Mammary epithelial cell (primary cell): ENCODE measurements at regions of chr4 and their contacts with region 1.

Region 1: GRCh38 chr4:152850377-152850776 is 70.6 kb downstream of the ARFIP1 start:
- DNase-seq: peak; percentile 83
- H3K4me3 ChIP-seq: peak overlapping the region in 1 of 3 experiments; percentile 5
- H3K27ac ChIP-seq: peak overlapping the region; percentile 78
- H3K4me1 ChIP-seq: peaks cover 26% of the 10 kb centered on the region
- H3K27me3 ChIP-seq: no peaks in the 10 kb centered on the region
- CTCF ChIP-seq: no peak

Region 2: DNA sequence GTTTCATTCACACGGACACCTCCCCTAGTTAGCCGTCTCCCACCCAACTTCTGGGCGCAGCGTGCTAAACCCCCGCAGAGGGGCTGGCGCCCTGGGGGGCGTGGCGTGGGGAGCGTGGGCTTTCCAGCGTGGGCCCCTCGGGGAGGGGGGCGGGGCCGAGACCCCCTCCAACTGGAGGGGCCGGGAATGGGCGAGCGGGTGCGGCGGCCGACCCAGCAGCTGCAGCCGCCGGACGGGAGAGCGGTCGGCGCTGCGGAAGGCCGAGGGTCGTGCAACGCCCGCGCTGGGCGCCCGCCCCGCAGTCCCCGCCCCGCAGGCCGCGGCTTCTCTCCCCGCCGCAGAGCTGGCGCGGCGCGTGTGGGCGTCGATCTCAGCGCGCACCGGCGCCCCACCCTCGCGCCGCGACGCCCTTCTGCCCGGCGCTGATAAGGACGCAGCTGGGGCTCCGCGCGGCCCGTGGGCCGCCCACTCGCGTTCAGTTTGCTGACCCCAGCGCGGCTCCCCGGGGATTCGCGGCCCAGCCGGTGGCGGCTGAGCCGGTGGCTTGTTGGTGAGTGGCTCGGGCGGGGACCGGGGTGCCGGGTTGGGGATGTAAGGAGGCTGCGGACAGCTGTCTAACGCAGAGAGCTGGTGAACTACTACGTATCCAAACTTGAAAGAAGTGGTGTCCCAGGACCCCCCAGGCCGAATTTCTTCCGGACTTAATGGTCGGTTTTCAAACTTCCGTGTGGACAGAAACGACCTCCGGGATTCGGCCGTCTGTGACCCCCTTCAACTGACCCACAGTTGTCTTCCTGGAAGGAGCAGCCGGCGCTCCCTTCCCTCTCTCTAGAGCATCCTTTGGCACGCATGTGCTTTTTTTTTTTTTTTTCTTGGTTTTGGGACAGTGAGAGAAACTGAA is 87.2 kb after region 1 on chr4:
- CTCF ChIA-PET with region 1: no interaction called
- dilution Hi-C with region 1: no loop called
- in situ Hi-C with region 1: no loop called
- intact Hi-C with region 1: loop called (anchors 1 kb)
- DNase-seq: peak; percentile 58
- H3K4me3 ChIP-seq: peak overlapping the region; percentile 88 to 91 (median 90)
- H3K27ac ChIP-seq: peak overlapping the region; percentile 52
- H3K4me1 ChIP-seq: peaks cover 16% of the 10 kb centered on the region
- H3K27me3 ChIP-seq: no peaks in the 10 kb centered on the region
- CTCF ChIP-seq: no peak

Region 3: DNA sequence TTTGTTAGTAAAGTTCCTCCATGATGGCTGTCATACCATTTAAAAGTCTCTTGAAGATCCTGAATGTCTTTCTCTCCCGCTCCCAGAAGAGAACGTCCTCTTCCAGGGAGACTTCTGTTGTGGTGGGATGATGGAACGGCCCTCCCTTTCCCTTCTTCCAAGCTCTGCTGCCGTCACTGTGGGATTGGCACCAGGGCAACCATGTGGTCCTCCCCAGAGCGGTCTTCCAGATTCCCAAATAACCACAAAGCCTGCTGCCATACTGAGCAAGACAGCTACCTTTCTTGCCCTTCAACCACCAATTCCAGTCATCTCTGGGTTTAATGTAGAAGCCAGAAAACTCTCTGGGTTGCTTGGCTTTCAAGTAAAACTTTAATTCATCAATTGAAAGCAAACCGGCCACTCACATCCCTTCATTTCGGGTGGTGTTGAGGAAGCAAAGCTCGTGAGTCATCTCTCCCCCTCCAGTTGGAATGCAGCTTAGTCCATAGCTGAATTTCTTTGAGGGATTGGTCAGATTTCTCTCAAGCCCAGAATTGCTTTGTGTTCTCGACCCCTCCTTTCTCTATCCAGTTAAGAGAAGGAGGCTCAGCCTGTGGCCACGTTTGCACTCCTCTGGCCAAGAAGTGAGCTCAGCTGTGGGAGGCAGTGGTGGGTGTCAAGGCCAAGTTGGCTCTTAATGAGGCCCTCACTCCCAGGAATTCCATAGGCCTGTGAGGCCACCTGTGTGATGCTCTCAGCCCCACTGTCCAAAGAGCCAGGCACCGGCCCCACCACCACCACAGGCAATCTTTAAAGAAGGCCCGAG is 122.6 kb after region 1 on chr4:
- CTCF ChIA-PET with region 1: no interaction called
- dilution Hi-C with region 1: no loop called
- in situ Hi-C with region 1: no loop called
- intact Hi-C with region 1: loop called (anchors 5 kb)
- DNase-seq: peak; percentile 82
- H3K4me3 ChIP-seq: no peak overlapping the region
- H3K27ac ChIP-seq: peak overlapping the region; percentile 69
- H3K4me1 ChIP-seq: peaks cover 55% of the 10 kb centered on the region
- H3K27me3 ChIP-seq: no peaks in the 10 kb centered on the region
- CTCF ChIP-seq: no peak

Region 4: GRCh38 chr4:153038623-153039311 is 188.4 kb after region 1 on chr4:
- CTCF ChIA-PET with region 1: no interaction called
- dilution Hi-C with region 1: no loop called
- in situ Hi-C with region 1: no loop called
- intact Hi-C with region 1: loop called (anchors 2 kb)
- DNase-seq: no peak
- H3K4me3 ChIP-seq: no peak overlapping the region
- H3K27ac ChIP-seq: peak overlapping the region; percentile 85
- H3K4me1 ChIP-seq: peaks cover 41% of the 10 kb centered on the region
- H3K27me3 ChIP-seq: no peaks in the 10 kb centered on the region
- CTCF ChIP-seq: no peak

Region 5: GRCh38 chr4:153083447-153083947 is 233.1 kb after region 1 on chr4:
- CTCF ChIA-PET with region 1: interaction called, 4 read pairs
- dilution Hi-C with region 1: no loop called
- in situ Hi-C with region 1: loop called (anchors 10 kb)
- intact Hi-C with region 1: loop called (anchors 1 kb)
- DNase-seq: peak; percentile 75
- H3K4me3 ChIP-seq: no peak overlapping the region
- H3K27ac ChIP-seq: no peak overlapping the region
- H3K4me1 ChIP-seq: peaks cover 21% of the 10 kb centered on the region
- H3K27me3 ChIP-seq: no peaks in the 10 kb centered on the region
- CTCF ChIP-seq: peak; percentile 58 to 65

Region 6: GRCh38 chr4:153122855-153123254 is 272.5 kb after region 1 on chr4:
- CTCF ChIA-PET with region 1: interaction called, 3 read pairs
- dilution Hi-C with region 1: no loop called
- in situ Hi-C with region 1: loop called (anchors 5 kb)
- intact Hi-C with region 1: loop called (anchors 1 kb)
- DNase-seq: no peak
- H3K4me3 ChIP-seq: no peak overlapping the region
- H3K27ac ChIP-seq: no peak overlapping the region
- H3K4me1 ChIP-seq: no peaks in the 10 kb centered on the region
- H3K27me3 ChIP-seq: no peaks in the 10 kb centered on the region
- CTCF ChIP-seq: no peak

Region 7: GRCh38 chr4:153233761-153234371 is 383.5 kb after region 1 on chr4:
- CTCF ChIA-PET with region 1: no interaction called
- dilution Hi-C with region 1: no loop called
- in situ Hi-C with region 1: no loop called
- intact Hi-C with region 1: no loop called
- DNase-seq: peak; percentile 92
- H3K4me3 ChIP-seq: peak overlapping the region in 1 of 3 experiments; percentile 3
- H3K27ac ChIP-seq: no peak overlapping the region
- H3K4me1 ChIP-seq: peaks cover 31% of the 10 kb centered on the region
- H3K27me3 ChIP-seq: no peaks in the 10 kb centered on the region
- CTCF ChIP-seq: no peak

Region 8: DNA sequence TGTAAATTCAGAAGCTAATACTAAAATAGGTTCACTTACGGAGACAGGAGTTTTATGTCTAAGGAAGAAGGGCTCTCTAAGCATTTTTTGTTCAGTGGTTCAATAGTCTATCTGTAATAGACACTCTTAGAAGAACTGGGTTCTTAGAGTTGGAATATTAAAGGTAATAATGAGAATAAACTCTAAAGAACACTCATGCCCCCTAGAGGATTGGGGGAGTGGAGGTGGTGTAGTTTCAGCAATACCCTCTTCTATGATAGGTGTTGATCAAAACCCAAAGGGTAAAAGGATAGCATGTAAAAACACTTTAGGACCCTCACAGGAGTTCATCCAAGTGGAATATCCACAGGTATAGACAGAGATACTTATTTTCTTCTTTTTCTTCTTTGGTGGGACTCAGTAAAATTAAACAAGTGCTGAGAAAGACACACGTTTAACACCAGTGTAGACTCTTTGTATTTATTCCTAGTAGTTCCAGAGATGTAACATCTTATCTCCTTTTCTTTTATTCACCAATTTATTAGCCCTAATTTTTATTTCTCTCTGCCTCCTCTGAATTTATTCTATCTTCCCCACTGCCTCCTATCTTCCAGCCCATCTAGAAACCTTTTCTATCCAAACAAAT is 468.4 kb after region 1 on chr4:
- CTCF ChIA-PET with region 1: no interaction called
- dilution Hi-C with region 1: no loop called
- in situ Hi-C with region 1: loop called (anchors 25 kb)
- intact Hi-C with region 1: loop called (anchors 5 kb)
- DNase-seq: peak; percentile 38
- H3K4me3 ChIP-seq: no peak overlapping the region
- H3K27ac ChIP-seq: no peak overlapping the region
- H3K4me1 ChIP-seq: no peaks in the 10 kb centered on the region
- H3K27me3 ChIP-seq: no peaks in the 10 kb centered on the region
- CTCF ChIP-seq: peak; percentile 73 to 82